HAP-1 (cell line): ENCODE measurements at regions of chr17 and their contacts with region 1.

Region 1: GRCh38 chr17:54992797-54993639 is 24.5 kb downstream of the STXBP4 start:
- DNase-seq: peak in 1 of 2 experiments; percentile 47
- H3K4me3 ChIP-seq: no peak overlapping the region
- H3K4me1 ChIP-seq: no peaks in the 10 kb centered on the region
- H3K27me3 ChIP-seq: no peaks in the 10 kb centered on the region

Region 2: DNA sequence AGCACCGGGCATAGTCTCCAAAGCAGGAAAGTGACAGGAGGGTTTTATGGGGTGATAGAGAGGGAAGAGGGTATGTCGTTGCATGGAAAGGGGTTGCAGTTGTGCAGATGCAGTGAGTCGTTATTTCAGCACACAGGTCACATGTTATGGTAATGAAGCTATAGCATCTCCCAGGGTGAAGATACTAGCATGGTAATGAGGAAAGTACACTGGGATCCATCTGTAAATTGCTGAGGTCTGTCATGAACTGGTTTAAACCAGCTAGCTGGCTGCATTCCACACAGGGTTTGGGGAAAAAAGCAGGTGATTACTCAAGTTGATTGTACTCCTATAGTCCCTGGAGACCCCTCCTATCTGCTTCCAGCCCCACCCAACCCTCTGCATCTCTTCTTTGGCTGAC is 36.2 kb before region 1 on chr17:
- in situ Hi-C with region 1: no loop called
- DNase-seq: peak; percentile 7 to 43
- H3K4me3 ChIP-seq: no peak overlapping the region
- H3K4me1 ChIP-seq: no peaks in the 10 kb centered on the region
- H3K27me3 ChIP-seq: no peaks in the 10 kb centered on the region

Region 3: DNA sequence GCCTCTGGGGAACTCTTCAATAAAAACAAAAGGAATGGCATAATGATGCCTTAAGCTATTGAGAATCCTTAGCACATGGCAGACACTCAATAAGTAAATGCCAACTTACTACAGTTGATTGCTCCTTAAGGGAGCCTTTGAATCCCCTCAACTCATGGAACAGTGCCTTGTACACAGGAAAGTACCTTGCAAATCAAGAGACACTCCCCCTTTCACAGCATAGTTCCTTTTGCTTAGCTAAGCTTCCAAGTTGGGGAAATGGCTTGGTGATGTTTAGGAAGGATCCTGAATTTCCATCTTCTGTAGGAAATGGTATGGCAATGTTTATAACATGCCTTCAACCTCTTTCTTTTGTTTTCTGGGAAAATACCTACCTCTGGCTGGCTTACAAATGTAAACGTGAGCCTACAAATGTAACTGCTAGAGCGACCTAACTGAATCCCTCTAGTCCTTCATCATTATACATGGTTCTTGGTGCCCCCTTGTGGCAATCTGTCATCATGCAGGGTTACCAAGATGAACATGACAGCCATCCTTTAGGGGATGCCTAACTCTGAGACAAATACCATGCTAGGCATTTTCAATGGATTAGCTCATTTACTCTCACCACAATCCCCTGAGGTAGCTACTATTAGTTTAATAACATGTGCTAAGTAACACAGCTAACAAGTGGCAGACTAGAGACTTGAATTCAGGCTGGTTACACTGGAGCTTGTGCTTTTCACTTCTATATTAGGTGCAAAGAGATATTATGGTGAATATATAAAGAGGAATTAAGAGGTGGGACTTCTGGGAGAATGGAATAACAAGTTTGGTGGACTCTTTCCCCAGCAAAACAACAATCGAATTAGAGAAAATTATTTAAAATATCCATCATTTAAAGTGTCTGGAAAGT is 363.7 kb after region 1 on chr17:
- in situ Hi-C with region 1: loop called (anchors 10 kb)
- DNase-seq: peak; percentile 70 to 85
- H3K4me3 ChIP-seq: no peak overlapping the region
- H3K4me1 ChIP-seq: no peaks in the 10 kb centered on the region
- H3K27me3 ChIP-seq: no peaks in the 10 kb centered on the region

Region 4: GRCh38 chr17:55513885-55514591 is 521.0 kb after region 1 on chr17:
- in situ Hi-C with region 1: loop called (anchors 25 kb)
- DNase-seq: peak; percentile 66 to 84
- H3K4me3 ChIP-seq: no peak overlapping the region
- H3K4me1 ChIP-seq: peaks cover 4% of the 10 kb centered on the region; the same call in 1 of the 2 replicates
- H3K27me3 ChIP-seq: peaks cover 9% of the 10 kb centered on the region; the same call in 1 of the 2 replicates